ENCODE measurements at regions of chr12 and their contacts with region 1.

Region 1: DNA sequence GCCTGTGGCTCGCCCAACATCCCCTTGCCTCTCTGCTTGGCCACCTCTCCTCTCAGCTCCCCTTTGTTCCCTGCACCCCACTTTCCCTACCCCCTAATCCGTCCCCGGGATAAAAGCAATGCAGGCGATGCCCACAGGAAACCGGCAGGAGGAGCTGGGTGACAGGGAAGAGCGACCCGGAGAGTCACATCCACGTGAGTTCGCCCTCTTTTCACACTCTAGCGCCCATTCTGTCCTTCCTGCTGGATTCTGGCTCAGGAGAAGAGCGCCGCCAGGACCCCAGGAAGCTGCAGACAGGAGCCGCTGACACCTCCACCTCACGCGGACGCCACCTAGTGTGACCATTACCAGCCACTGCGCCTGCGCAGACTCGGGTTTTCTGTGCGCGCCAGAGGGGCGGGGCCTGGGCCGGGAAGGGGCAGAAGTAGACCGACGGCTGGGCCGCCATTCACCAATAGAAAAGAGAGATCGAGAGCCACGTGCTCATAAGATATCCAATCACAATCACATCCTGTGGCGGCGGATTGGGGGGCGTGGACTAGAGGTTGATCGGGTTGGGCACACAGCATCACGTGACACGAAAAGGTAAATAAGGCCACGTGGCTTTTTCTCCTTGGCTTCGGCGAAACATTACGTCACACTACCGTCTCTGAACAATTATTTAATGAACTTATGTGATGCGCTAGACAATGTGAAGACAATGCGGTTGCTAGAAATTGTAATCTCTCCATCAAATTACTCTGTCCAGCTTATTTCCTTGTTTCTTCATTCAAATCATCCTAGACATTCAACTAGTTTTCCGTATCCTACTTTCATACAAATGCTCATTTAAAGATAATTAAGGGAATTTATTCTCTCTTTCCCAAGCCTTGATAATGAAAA is 10.1 kb downstream of the PLA2G1B start:
- DNase-seq: peak; percentile 97 to 99 (median 99)
- H3K4me3 ChIP-seq: peak overlapping the region; percentile 45 to 76 (median 59)
- H3K4me3 Mint-ChIP-seq: peak overlapping the region; percentile 84 to 94
- H3K27ac ChIP-seq: peak overlapping the region; percentile 30 to 65
- H3K27ac Mint-ChIP-seq: peak overlapping the region; percentile 82 to 95 (median 88)
- H3K4me1 ChIP-seq: peaks cover 11 to 13% of the 10 kb centered on the region in 2 donors
- H3K4me1 Mint-ChIP-seq: peaks cover 11% of the 10 kb centered on the region
- H3K27me3 ChIP-seq: no peaks in the 10 kb centered on the region
- H3K27me3 Mint-ChIP-seq: peaks cover 1 to 6% (median 4%) of the 10 kb centered on the region in 3 donors
- CTCF ChIP-seq: peak; percentile 64

Region 2: DNA sequence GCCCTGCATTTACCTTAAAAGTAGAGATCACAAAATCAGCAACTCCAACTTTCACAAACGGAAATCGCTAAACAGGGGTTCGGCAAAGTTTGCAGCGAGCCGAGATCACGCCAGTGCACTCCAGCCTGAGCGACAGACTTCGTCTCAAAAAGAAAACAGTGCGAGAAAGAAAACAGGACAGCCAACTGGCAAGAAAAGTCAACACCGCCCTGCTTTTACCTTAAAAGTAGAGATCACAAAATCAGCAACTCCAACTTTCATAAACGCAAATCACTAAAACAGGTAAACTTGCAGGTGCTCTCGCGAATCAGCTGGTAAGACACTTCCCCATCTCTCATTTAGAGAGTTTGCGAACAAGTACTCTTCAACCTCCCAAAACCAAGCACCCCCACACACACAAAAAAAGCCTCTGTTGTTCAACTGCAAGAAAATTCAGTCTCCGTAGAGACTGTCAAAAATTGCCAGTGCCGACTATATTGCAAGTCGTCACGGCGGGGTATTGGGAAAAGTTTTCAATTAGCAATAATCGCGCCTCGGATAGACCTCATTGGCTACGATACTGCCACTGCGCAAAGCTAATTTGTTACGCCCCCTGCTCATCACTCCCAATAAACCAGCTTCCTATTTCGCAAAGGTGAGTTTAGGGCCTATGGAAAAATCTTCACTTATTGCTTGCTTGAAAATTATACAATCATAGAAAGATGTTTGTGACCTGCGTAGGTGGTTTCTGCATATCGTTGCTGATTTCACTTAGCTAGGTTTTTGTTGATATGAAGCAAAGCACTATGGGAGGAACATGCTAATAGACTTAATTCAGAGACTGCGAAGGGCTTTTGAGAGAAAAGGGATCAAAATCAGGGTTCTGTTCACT is 24.6 kb before region 1 on chr12 and contains the start of gene RNU4-1:
- intact Hi-C with region 1: loop called in 1 of 2 experiments (anchors 1 kb)
- DNase-seq: peak; percentile 83 to 89 (median 84)
- H3K4me3 ChIP-seq: peak within 1 kb of the TSS; percentile 63 to 79 (median 65)
- H3K4me3 Mint-ChIP-seq: no peak within 1 kb of the TSS
- H3K27ac ChIP-seq: peak within 1 kb of the TSS; percentile 98 to 100
- H3K27ac Mint-ChIP-seq: no peak within 1 kb of the TSS
- H3K4me1 ChIP-seq: peaks cover 27 to 38% of the 10 kb centered on the region in 2 donors
- H3K4me1 Mint-ChIP-seq: no peaks in the 10 kb centered on the region
- H3K27me3 ChIP-seq: no peaks in the 10 kb centered on the region
- H3K27me3 Mint-ChIP-seq: peaks cover 0 to 2% (median 0%) of the 10 kb centered on the region in 3 donors
- CTCF ChIP-seq: no peak
- polyA plus RNA-seq, gene RNU4-1: not detected

Region 3: GRCh38 chr12:120301962-120302815 is 15.3 kb before region 1 on chr12 and contains the start of gene SIRT4:
- intact Hi-C with region 1: loop called in 1 of 2 experiments (anchors 2 kb)
- DNase-seq: peak; percentile 86 to 91 (median 88)
- H3K4me3 ChIP-seq: peak within 1 kb of the TSS; percentile 77 to 91 (median 79)
- H3K4me3 Mint-ChIP-seq: peak within 1 kb of the TSS; percentile 93 to 96
- H3K27ac ChIP-seq: peak within 1 kb of the TSS in 1 of 2 donors; percentile 47
- H3K27ac Mint-ChIP-seq: peak within 1 kb of the TSS; percentile 2 to 94 (median 88)
- H3K4me1 ChIP-seq: peaks cover 8 to 10% of the 10 kb centered on the region in 2 donors
- H3K4me1 Mint-ChIP-seq: peaks cover 9% of the 10 kb centered on the region
- H3K27me3 ChIP-seq: no peaks in the 10 kb centered on the region
- H3K27me3 Mint-ChIP-seq: peaks cover 0 to 5% (median 2%) of the 10 kb centered on the region in 3 donors
- CTCF ChIP-seq: peak; percentile 87
- polyA plus RNA-seq, gene SIRT4: 0.30 to 0.72 (median 0.53) TPM

Region 4: DNA sequence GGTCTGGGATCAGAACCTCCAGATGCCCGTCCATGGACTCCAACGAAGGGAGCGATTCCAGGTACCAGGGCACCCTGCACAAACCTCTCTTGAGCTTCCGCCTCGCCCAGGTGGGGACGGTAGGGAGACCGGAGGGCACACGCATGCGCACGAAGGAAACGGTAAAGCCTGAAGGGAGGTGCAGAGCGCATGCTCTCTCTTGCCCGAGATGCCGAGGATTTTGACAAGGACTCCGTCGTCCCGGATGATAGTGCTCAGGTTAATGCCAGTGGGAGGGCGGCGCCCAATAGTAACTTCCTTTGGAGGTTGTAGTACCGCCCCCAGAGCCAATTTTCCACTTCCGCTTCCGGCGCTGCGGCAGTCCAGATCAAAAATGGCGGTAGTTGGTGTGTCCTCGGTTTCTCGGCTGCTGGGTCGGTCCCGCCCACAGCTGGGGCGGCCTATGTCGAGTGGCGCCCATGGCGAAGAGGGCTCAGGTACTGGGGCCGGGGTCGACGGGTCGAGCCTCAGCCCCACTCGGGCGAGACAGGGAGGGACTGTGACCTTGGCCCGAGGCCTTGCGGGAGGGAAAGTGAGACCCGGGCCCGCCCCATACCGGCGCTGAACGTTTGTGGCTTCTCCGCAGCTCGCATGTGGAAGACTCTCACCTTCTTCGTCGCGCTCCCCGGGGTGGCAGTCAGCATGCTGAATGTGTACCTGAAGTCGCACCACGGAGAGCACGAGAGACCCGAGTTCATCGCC is 120.5 kb after region 1 on chr12 and contains the start of gene COX6A1:
- intact Hi-C with region 1: loop called (anchors 5 to 10 kb)
- DNase-seq: peak; percentile 87 to 95 (median 94)
- H3K4me3 ChIP-seq: peak within 1 kb of the TSS; percentile 57 to 95 (median 94)
- H3K4me3 Mint-ChIP-seq: peak within 1 kb of the TSS; percentile 91 to 96
- H3K27ac ChIP-seq: peak within 1 kb of the TSS; percentile 85
- H3K27ac Mint-ChIP-seq: peak within 1 kb of the TSS; percentile 91 to 95 (median 94)
- H3K4me1 ChIP-seq: peaks cover 23 to 26% of the 10 kb centered on the region in 2 donors
- H3K4me1 Mint-ChIP-seq: peaks cover 16% of the 10 kb centered on the region
- H3K27me3 ChIP-seq: no peaks in the 10 kb centered on the region
- H3K27me3 Mint-ChIP-seq: peaks cover 0 to 11% (median 4%) of the 10 kb centered on the region in 3 donors
- CTCF ChIP-seq: no peak
- polyA plus RNA-seq, gene COX6A1: 345 to 924 (median 901) TPM

Region 5: DNA sequence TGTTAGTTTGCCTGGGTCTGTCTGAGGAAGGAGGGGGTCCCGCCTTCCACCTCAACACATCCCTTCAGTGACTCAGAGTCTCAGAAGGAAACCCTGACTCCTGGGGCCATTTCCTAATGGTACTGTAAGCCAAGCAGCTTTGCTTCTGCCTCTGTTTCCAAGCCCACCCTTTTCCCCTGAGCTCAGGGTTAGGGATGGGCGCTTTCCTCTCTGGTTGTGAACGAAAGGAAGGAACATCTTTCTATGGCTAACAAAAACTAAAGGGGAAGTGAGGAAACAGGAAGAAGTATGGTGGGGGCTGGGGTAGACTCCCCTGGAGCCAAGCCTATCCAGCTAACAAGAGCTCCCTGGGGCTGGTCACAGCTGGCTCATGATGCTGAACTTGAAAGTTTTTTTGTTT is 381.2 kb after region 1 on chr12:
- intact Hi-C with region 1: no loop called
- DNase-seq: peak; percentile 56 to 68 (median 66)
- H3K4me3 ChIP-seq: peak overlapping the region in 1 of 3 experiments; percentile 41
- H3K4me3 Mint-ChIP-seq: peak overlapping the region; percentile 58 to 64
- H3K27ac ChIP-seq: peak overlapping the region; percentile 67 to 86
- H3K27ac Mint-ChIP-seq: peak overlapping the region; percentile 82 to 95 (median 92)
- H3K4me1 ChIP-seq: peaks cover 21 to 25% of the 10 kb centered on the region in 2 donors
- H3K4me1 Mint-ChIP-seq: peaks cover 24% of the 10 kb centered on the region
- H3K27me3 ChIP-seq: no peaks in the 10 kb centered on the region
- H3K27me3 Mint-ChIP-seq: peaks cover 0 to 2% (median 0%) of the 10 kb centered on the region in 3 donors
- CTCF ChIP-seq: no peak

Region 6: GRCh38 chr12:120783197-120783596 is 465.7 kb after region 1 on chr12:
- intact Hi-C with region 1: no loop called
- DNase-seq: peak; percentile 13 to 66 (median 36)
- H3K4me3 ChIP-seq: no peak overlapping the region
- H3K4me3 Mint-ChIP-seq: no peak overlapping the region
- H3K27ac ChIP-seq: peak overlapping the region in 1 of 2 donors; percentile 64
- H3K27ac Mint-ChIP-seq: peak overlapping the region in 4 of 7 donors; percentile 0 to 45 (median 27)
- H3K4me1 ChIP-seq: peaks cover 6 to 11% of the 10 kb centered on the region in 2 donors
- H3K4me1 Mint-ChIP-seq: peaks cover 10% of the 10 kb centered on the region
- H3K27me3 ChIP-seq: no peaks in the 10 kb centered on the region
- H3K27me3 Mint-ChIP-seq: no peaks in the 10 kb centered on the region
- CTCF ChIP-seq: no peak